Activated CD4-positive, alpha-beta memory T cell treated with anti-CD3 and anti-CD28 coated beads, Interleukin-2, amount 10 ng/mL, durations not matched to agents 7 days and 5 days (primary cell): ENCODE measurements at regions of chr10 and their contacts with region 1.

Region 1: GRCh38 chr10:31864834-31865518 is 63.7 kb downstream of the ARHGAP12 start:
- DNase-seq: no peak
- H3K4me3 Mint-ChIP-seq: no peak overlapping the region
- H3K27ac Mint-ChIP-seq: no peak overlapping the region
- H3K4me1 Mint-ChIP-seq: peaks cover 4% of the 10 kb centered on the region
- H3K27me3 Mint-ChIP-seq: no peaks in the 10 kb centered on the region

Region 2: DNA sequence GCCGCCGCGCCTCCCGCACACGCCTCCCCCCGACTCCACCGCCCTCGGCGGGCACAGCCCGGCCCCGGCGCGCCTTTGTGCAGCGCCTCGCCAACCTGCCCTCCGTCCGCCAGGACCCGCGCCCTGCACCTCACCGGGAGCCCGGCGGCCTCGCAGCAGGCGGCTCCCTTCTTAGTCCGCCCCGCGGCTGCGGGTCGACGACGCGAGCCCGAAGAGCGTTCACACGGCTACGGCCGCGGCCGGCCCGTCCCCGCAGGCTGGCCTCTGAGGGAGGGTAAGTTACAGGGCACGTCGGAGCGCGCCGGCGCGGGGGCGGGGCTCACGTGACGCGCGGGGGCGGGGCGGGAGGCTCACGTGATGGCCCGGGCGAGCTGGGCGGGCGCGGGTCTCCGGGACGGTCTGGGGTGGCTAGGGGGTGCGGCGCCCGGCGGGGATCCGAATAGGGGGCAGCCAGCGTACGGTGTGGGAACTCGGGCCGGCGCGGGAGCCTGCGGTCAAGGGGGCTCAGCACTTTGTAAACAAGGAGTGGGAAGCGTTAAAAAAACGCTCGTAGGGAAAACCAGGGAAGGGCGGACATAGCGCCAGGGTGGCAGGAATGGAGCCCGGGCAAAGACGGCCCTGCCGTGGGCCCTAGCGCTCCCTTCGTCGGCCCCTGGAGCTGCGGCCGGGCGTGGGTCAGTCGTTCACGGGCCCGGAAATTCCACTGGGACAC is 63.7 kb after region 1 on chr10 and contains the start of gene ARHGAP12:
- CTCF ChIA-PET with region 1: interaction called, 12 read pairs
- POLR2A ChIA-PET with region 1: interaction called, 10 read pairs
- DNase-seq: peak; percentile 86
- H3K4me3 Mint-ChIP-seq: peak within 1 kb of the TSS; percentile 78
- H3K27ac Mint-ChIP-seq: peak within 1 kb of the TSS; percentile 68
- H3K4me1 Mint-ChIP-seq: peaks cover 49% of the 10 kb centered on the region
- H3K27me3 Mint-ChIP-seq: peaks cover 6% of the 10 kb centered on the region
- total RNA-seq, gene ARHGAP12: 10.7 to 12.0 TPM

Region 3: GRCh38 chr10:32005050-32005449 is 140.1 kb after region 1 on chr10:
- CTCF ChIA-PET with region 1: interaction called, 65 read pairs
- POLR2A ChIA-PET with region 1: interaction called, 7 read pairs
- DNase-seq: peak; percentile 29
- H3K4me3 Mint-ChIP-seq: no peak overlapping the region
- H3K27ac Mint-ChIP-seq: no peak overlapping the region
- H3K4me1 Mint-ChIP-seq: peaks cover 6% of the 10 kb centered on the region
- H3K27me3 Mint-ChIP-seq: no peaks in the 10 kb centered on the region

Region 4: GRCh38 chr10:32210306-32211045 is 345.5 kb after region 1 on chr10:
- CTCF ChIA-PET with region 1: interaction called, 12 read pairs
- POLR2A ChIA-PET with region 1: no interaction called
- DNase-seq: no peak
- H3K4me3 Mint-ChIP-seq: no peak overlapping the region
- H3K27ac Mint-ChIP-seq: no peak overlapping the region
- H3K4me1 Mint-ChIP-seq: peaks cover 2% of the 10 kb centered on the region
- H3K27me3 Mint-ChIP-seq: no peaks in the 10 kb centered on the region